GM12878 (cell line): ENCODE measurements at regions of chrX and their contacts with region 1.

Region 1: DNA sequence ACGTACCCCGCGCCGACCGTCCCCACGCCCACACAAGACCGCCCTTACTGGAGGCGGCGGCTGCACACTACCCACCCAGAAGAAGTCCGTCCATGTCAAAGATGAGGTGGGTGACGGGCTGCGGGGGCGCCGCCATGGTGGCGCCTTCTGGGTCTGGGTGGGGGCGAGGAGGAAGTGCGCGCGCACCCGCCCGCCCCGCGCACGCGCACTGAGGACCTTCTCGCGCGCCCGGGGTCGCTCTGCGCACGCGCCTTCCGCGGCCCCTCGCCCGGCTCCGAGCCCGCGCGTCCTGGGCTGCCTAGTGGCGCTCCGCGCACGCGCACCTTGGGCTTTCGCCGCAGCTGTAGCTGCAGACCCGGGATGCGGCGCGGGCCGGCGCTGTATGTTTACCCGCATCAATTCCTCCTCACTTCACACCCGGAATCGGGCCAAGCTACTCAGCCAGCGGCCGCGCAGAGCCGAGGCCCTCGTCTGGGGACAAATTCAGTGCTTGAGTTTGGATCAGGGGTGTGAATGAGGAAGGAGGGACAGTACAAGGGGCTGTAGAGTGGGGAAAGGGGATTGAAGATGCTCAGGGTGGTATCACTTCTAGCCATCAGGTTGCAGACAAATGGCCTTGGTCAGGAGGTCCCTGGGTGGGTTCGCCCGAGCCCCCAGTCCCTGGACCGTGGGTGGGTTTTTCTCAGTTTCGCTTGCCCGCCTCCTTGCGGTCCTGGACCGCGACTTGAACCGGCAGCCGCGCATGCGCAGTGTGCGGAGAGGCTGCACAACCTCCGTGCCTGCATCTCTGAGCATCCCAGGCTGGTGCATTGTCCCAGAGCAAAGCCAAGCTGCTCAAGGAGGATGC is at the start of gene PUDP:
- DNase-seq: no peak
- ATAC-seq: peak; percentile 86
- H3K4me3 ChIP-seq: peak within 1 kb of the TSS; percentile 98
- H3K27ac ChIP-seq: peak within 1 kb of the TSS; percentile 87
- H3K4me1 ChIP-seq: peaks cover 15% of the 10 kb centered on the region
- H3K27me3 ChIP-seq: no peaks in the 10 kb centered on the region
- CTCF ChIP-seq: peak in 2 of 3 experiments; percentile 25; a peak in 3 of 6 replicates
- EP300 ChIP-seq: no peak
- POLR2A ChIP-seq: peak; percentile 78
- RAD21 ChIP-seq: peak; percentile 9; the same call in 1 of the 2 replicates
- polyA plus RNA-seq, gene PUDP: 68.9 to 83.5 TPM

Region 2: GRCh38 chrX:6169407-6169806 is 978.8 kb before region 1 on chrX:
- CTCF ChIA-PET with region 1: no interaction called
- POLR2A ChIA-PET with region 1: no interaction called
- RAD21 ChIA-PET with region 1: no interaction called
- SMC1A ChIA-PET with region 1: no interaction called
- in situ Hi-C with region 1: no loop called
- intact Hi-C with region 1: no loop called
- DNase-seq: no peak
- ATAC-seq: no peak
- H3K4me3 ChIP-seq: no peak overlapping the region
- H3K27ac ChIP-seq: no peak overlapping the region
- H3K4me1 ChIP-seq: no peaks in the 10 kb centered on the region
- H3K27me3 ChIP-seq: no peaks in the 10 kb centered on the region
- CTCF ChIP-seq: no peak
- EP300 ChIP-seq: no peak
- POLR2A ChIP-seq: no peak
- RAD21 ChIP-seq: no peak

Region 3: DNA sequence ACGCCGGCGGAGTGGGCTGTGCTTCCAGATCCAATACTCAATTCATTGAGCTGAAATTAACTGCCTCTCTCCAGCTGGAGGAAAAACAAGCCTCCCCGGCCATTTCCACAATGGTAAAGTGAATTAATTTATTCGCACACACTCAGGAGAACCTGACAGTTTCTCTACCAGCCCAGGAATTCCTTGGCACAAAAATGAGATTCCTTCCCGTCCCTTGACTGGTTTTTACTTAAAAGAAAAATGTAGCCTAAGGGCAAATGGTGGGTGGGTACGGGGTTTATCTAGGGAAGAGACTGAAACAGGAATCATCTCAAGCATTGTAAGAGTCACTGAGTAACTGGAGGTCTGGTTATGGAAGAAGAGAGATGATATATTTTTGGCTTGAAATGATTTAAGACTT is 716.0 kb before region 1 on chrX:
- CTCF ChIA-PET with region 1: no interaction called
- POLR2A ChIA-PET with region 1: no interaction called
- RAD21 ChIA-PET with region 1: no interaction called
- SMC1A ChIA-PET with region 1: no interaction called
- in situ Hi-C with region 1: no loop called
- intact Hi-C with region 1: no loop called
- DNase-seq: no peak
- ATAC-seq: no peak
- H3K4me3 ChIP-seq: no peak overlapping the region
- H3K27ac ChIP-seq: no peak overlapping the region
- H3K4me1 ChIP-seq: no peaks in the 10 kb centered on the region
- H3K27me3 ChIP-seq: no peaks in the 10 kb centered on the region
- CTCF ChIP-seq: no peak
- EP300 ChIP-seq: no peak
- POLR2A ChIP-seq: no peak
- RAD21 ChIP-seq: no peak

Region 4: GRCh38 chrX:6946168-6946567 is 202.0 kb before region 1 on chrX:
- CTCF ChIA-PET with region 1: no interaction called
- POLR2A ChIA-PET with region 1: no interaction called
- RAD21 ChIA-PET with region 1: no interaction called
- SMC1A ChIA-PET with region 1: no interaction called
- in situ Hi-C with region 1: no loop called
- intact Hi-C with region 1: no loop called
- DNase-seq: no peak
- ATAC-seq: no peak
- H3K4me3 ChIP-seq: no peak overlapping the region
- H3K27ac ChIP-seq: no peak overlapping the region
- H3K4me1 ChIP-seq: no peaks in the 10 kb centered on the region
- H3K27me3 ChIP-seq: no peaks in the 10 kb centered on the region
- CTCF ChIP-seq: no peak
- EP300 ChIP-seq: no peak
- POLR2A ChIP-seq: no peak
- RAD21 ChIP-seq: no peak

Region 5: DNA sequence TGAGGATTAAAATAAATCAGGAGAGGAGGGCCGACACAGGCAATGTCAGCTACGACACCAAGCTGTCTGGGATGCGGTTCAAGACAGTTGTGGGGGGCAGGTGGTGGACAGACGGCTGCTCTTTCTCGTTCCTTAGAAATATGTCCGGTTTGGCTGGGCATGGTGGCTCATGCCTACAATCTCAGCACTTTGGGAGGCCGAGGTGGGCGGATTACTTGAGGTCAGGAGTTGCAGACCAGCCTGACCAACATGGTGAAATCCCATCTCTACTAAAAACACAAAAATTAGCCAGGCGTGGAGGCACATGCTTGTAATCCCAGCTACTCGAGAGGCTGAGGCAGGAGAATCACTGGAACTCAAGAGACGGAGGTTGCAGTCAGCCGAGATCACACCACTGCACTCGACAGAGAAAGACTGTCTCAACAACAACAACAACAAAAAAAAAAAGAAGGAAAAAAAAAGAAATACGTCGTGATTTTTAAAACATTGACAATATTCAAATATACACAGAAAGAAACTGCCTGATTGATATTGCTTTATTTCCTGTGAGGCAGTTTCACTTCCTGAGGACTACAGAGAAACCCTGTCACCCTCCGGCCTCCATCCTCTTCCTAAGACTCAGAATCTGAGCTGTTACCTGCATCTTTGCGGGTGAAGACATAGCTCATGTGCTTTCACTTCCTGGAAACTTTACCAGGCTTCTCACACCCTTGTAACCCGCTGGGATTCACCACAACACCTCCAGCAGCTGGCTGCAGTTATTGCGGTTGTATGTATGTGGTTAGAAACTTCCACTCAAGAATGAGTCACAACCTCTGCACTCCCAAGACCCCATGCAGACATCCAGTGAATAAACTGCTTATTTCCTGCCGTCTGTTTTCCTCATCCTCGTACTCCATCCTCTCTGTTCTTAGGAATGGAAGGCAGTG is 64.5 kb before region 1 on chrX:
- CTCF ChIA-PET with region 1: interaction called, 4 read pairs
- POLR2A ChIA-PET with region 1: no interaction called
- RAD21 ChIA-PET with region 1: interaction called, 35 read pairs
- SMC1A ChIA-PET with region 1: interaction called, 6 read pairs
- in situ Hi-C with region 1: no loop called
- intact Hi-C with region 1: loop called (anchors 2 kb)
- DNase-seq: peak; percentile 84
- ATAC-seq: peak; percentile 85
- H3K4me3 ChIP-seq: no peak overlapping the region; the same call in 1 of the 2 replicates
- H3K27ac ChIP-seq: peak overlapping the region; percentile 46
- H3K4me1 ChIP-seq: peaks cover 45% of the 10 kb centered on the region
- H3K27me3 ChIP-seq: no peaks in the 10 kb centered on the region
- CTCF ChIP-seq: no peak
- EP300 ChIP-seq: peak; percentile 94
- POLR2A ChIP-seq: no peak
- RAD21 ChIP-seq: no peak

Region 6: DNA sequence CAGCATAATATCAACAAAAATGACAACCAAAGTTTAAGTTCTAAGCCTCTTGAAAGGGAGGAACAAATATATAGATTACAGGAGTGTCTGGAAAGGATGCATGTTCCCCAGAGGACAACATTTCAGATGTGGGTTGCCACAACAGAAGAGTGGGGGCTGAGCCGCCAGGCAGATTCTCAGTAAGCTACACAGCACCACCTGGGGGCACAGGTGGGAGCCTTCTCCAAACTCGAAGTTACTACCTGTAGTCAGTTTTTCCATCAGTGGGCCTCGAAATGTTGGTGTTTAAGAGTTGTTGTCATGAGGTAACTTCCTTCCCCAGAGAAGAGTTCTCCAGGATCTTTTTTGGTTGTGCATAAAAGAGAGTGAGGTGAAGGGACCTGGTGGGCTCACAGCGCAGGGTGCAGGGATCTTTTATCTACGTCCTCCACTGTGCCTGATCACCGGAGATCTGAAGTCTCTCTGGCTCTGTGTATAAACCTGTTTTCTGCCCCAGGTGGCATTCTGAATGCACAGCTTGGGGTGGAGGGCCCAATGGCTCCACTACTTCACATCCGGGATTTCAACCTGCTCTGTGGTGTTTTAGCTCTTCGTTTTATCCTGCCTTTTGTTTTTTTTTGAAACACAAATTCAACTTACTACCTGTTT is 59.1 kb before region 1 on chrX:
- CTCF ChIA-PET with region 1: interaction called, 4 read pairs
- POLR2A ChIA-PET with region 1: no interaction called
- RAD21 ChIA-PET with region 1: interaction called, 35 read pairs
- SMC1A ChIA-PET with region 1: interaction called, 14 read pairs
- in situ Hi-C with region 1: no loop called
- intact Hi-C with region 1: loop called (anchors 2 kb)
- DNase-seq: no peak
- ATAC-seq: peak; percentile 57
- H3K4me3 ChIP-seq: no peak overlapping the region
- H3K27ac ChIP-seq: peak overlapping the region; percentile 42; the same call in 1 of the 2 replicates
- H3K4me1 ChIP-seq: peaks cover 48% of the 10 kb centered on the region
- H3K27me3 ChIP-seq: no peaks in the 10 kb centered on the region
- CTCF ChIP-seq: peak; percentile 51 to 61 (median 59)
- EP300 ChIP-seq: no peak
- POLR2A ChIP-seq: no peak
- RAD21 ChIP-seq: peak; percentile 78

Region 7: DNA sequence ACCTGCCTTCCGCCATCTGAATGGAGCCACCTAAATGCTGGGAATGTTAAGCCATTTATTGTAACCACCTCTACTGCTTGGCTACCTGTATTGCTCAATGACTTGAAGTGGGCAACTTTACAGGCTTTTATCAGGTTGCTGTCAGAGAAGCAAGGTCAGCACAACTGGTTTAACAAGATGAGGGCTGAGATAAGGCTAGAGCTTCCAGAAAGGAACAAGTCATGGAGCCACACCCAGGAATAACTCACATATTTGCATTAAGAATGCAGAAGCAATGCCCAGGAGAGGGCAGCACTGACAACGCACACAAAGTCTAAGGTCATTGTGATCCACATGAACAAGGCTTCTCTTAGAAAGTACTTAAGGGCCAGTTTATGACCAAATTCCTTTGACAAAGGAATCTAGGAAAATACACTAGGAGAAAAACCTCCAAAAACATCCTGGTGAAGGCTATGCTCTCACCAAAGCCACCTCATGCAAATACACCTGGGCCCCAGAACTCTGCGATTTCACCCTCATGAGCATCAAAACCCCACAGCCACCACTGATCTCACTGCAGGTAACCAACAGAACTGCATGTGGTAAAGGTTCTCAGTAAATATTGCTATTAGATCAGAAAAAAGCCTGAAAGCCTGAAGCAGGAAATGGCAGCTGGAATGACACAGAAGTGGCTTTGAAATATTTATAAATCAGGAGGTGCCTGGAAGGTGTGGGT is 15.7 kb before region 1 on chrX:
- CTCF ChIA-PET with region 1: interaction called, 24 read pairs
- POLR2A ChIA-PET with region 1: interaction called, 21 read pairs
- RAD21 ChIA-PET with region 1: interaction called, 31 read pairs
- SMC1A ChIA-PET with region 1: interaction called, 56 read pairs
- in situ Hi-C with region 1: no loop called
- intact Hi-C with region 1: no loop called
- DNase-seq: no peak
- ATAC-seq: peak; percentile 93
- H3K4me3 ChIP-seq: no peak overlapping the region
- H3K27ac ChIP-seq: peak overlapping the region; percentile 30
- H3K4me1 ChIP-seq: peaks cover 12% of the 10 kb centered on the region
- H3K27me3 ChIP-seq: no peaks in the 10 kb centered on the region
- CTCF ChIP-seq: peak; percentile 55 to 60 (median 56)
- EP300 ChIP-seq: no peak
- POLR2A ChIP-seq: no peak
- RAD21 ChIP-seq: peak; percentile 66

Region 8: DNA sequence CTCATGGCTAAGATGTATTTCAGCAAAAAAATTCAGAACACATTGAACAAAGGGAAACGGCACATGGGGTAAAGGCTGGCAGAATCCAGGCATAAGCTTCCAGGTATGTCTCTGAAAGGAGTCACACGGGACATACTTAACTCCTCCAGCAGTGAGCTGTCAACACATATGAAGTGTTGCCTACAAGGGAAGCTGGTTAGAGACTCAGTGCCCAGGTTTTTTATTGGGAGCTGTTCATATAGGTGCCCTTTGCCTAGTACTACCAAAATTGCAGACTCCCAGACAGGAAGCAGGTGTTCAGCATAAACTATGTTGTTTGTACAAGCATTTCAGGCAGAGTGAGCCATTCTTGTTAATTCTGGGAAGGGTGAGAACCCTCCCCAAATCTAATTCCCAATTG is 77.1 kb after region 1 on chrX:
- CTCF ChIA-PET with region 1: no interaction called
- POLR2A ChIA-PET with region 1: no interaction called
- RAD21 ChIA-PET with region 1: no interaction called
- SMC1A ChIA-PET with region 1: no interaction called
- in situ Hi-C with region 1: no loop called
- intact Hi-C with region 1: no loop called
- DNase-seq: no peak
- ATAC-seq: no peak
- H3K4me3 ChIP-seq: no peak overlapping the region
- H3K27ac ChIP-seq: no peak overlapping the region
- H3K4me1 ChIP-seq: no peaks in the 10 kb centered on the region
- H3K27me3 ChIP-seq: no peaks in the 10 kb centered on the region
- CTCF ChIP-seq: no peak
- EP300 ChIP-seq: no peak
- POLR2A ChIP-seq: no peak
- RAD21 ChIP-seq: no peak

Region 9: DNA sequence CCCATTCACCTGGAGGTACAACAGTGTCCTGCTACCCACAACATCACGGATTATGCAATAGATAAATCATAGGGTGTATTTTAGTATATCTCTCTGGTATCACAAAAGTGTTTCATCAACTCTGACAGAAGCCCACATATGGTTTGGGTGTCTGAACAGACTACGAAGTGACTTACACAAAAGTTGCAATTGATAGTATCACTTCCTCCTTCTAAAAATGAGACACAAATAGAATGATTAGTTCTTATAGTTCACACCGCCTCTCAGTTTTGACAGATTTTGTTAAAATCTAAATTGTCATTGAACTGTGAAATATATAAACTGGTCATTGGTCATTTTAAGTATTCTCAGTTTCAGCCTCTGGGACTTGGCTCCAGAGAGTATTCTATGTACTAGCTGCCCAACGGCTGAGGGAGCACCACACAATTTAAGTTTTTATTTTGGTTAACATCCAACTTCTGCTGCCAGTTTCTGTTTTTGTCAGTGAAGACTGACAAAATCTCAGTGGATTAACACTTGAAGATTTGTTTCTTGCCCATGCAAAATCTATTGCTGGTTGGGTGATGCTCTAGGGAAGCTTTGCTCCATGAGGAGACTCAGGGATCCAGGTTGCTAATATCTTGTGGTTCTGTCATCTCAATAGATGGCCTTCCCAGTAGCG is 113.6 kb after region 1 on chrX:
- CTCF ChIA-PET with region 1: interaction called, 3 read pairs
- POLR2A ChIA-PET with region 1: no interaction called
- RAD21 ChIA-PET with region 1: interaction called, 4 read pairs
- SMC1A ChIA-PET with region 1: interaction called, 4 read pairs
- in situ Hi-C with region 1: no loop called
- intact Hi-C with region 1: loop called (anchors 2 kb)
- DNase-seq: peak; percentile 57
- ATAC-seq: peak; percentile 92
- H3K4me3 ChIP-seq: no peak overlapping the region
- H3K27ac ChIP-seq: peak overlapping the region; percentile 13; the same call in 1 of the 2 replicates
- H3K4me1 ChIP-seq: peaks cover 18% of the 10 kb centered on the region
- H3K27me3 ChIP-seq: no peaks in the 10 kb centered on the region
- CTCF ChIP-seq: no peak
- EP300 ChIP-seq: peak; percentile 92 to 96
- POLR2A ChIP-seq: no peak
- RAD21 ChIP-seq: no peak